Keratinocyte (primary cell): ENCODE measurements at regions of chr1 and their contacts with region 1.

Region 1: GRCh38 chr1:23422241-23423030 is 2.1 kb downstream of the TCEA3 start:
- DNase-seq: no peak
- H3K4me3 ChIP-seq: no peak overlapping the region
- H3K27ac ChIP-seq: no peak overlapping the region
- H3K4me1 ChIP-seq: peaks cover 22% of the 10 kb centered on the region
- H3K27me3 ChIP-seq: peaks cover 23% of the 10 kb centered on the region
- CTCF ChIP-seq: no peak

Region 2: DNA sequence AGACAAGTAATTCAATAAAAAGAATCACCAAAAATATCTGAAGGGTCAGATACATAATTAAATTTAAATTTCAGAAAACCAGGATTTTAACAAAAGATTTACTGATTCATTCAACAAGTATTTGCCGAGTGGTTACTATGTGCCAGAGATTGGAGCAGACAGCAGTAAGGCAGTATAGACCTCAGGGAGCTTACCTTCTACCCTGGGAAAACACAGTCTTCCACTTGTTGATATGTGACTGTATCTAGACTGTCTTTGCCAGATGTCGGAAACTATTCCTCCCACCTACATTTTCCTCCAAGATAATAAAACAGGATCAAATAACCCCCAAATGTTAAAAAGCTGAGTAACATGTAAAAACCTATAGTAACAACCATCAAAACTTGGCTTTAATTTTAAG is 84.6 kb before region 1 on chr1:
- dilution Hi-C with region 1: loop called (anchors 10 kb)
- DNase-seq: no peak
- H3K4me3 ChIP-seq: no peak overlapping the region
- H3K27ac ChIP-seq: no peak overlapping the region
- H3K4me1 ChIP-seq: peaks cover 21% of the 10 kb centered on the region
- H3K27me3 ChIP-seq: no peaks in the 10 kb centered on the region
- CTCF ChIP-seq: no peak